ENCODE measurements at regions of chr10 and their contacts with region 1.

Region 1: DNA sequence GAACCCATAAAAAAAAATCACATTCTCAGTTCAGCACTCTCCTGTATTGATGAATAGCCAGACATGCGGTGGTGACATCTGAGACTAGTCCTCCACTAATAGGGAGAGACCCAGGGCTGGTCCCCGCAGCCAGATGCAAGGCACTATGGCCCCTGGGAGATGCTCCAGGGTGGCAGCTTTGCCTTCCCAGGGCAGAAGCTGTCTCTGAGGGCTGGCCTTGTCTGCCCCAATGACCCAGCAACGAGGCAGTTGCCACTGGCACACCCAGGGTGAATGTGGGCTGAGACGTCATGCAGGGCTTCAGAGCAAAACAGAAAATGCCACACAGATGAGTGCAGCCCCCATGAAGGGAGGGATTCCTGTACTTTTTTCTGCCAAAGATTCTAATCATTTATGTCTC is 50.1 kb upstream of the GDF10 start:
- DNase-seq: no peak
- ATAC-seq: no peak
- H3K4me3 ChIP-seq: no peak overlapping the region
- H3K27ac ChIP-seq: no peak overlapping the region
- H3K4me1 ChIP-seq: no peaks in the 10 kb centered on the region
- H3K27me3 ChIP-seq: no peaks in the 10 kb centered on the region
- CTCF ChIP-seq: no peak
- POLR2A ChIP-seq: no peak
- RAD21 ChIP-seq: no peak

Region 2: GRCh38 chr10:46002916-46003693 is 1246.8 kb before region 1 on chr10:
- CTCF ChIA-PET with region 1: no interaction called
- POLR2A ChIA-PET with region 1: no interaction called
- RAD21 ChIA-PET with region 1: no interaction called
- intact Hi-C with region 1: no loop called
- DNase-seq: no peak
- ATAC-seq: no peak
- H3K4me3 ChIP-seq: no peak overlapping the region
- H3K27ac ChIP-seq: no peak overlapping the region
- H3K4me1 ChIP-seq: no peaks in the 10 kb centered on the region
- H3K27me3 ChIP-seq: no peaks in the 10 kb centered on the region
- CTCF ChIP-seq: no peak
- POLR2A ChIP-seq: no peak
- RAD21 ChIP-seq: no peak

Region 3: DNA sequence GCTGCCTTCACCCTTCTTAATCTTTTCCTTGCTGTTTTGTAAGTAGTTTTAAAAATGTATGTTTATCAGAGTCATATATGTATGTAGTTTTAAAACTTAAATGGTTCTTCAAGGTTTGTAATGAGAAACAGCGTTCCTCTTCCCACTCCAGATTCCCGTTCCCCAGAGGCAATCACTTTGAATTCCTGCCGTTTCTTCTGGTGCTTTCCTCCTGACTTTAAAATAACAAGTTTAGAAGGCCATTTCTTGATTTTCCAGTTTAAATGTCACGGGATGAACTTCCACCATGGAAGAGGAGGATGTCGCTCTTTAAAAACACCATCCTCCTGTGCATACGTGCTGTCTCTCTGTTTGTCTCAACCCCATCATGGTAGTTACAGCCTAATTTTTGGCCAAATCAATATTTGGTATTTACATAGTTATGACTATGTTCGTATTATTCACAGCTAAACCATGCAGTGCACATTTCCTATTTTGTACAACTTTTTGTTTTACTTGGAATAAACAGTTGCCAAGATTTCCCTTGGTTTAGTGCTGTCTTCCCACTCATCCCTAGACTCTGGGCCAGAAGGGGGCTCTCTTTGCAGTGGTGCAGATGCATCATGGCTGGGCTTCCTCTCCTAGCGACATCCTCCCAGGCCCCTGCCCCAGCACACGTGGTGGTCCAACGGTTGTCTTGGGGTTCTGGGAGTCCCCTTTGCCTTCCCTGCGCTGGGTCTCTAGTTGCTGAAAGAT is 187.2 kb before region 1 on chr10:
- CTCF ChIA-PET with region 1: no interaction called
- POLR2A ChIA-PET with region 1: no interaction called
- RAD21 ChIA-PET with region 1: no interaction called
- intact Hi-C with region 1: no loop called
- DNase-seq: no peak
- ATAC-seq: peak; percentile 67; the same call in 1 of the 2 replicates
- H3K4me3 ChIP-seq: no peak overlapping the region
- H3K27ac ChIP-seq: no peak overlapping the region
- H3K4me1 ChIP-seq: no peaks in the 10 kb centered on the region
- H3K27me3 ChIP-seq: peaks cover 34% of the 10 kb centered on the region; the same call in 1 of the 2 replicates
- CTCF ChIP-seq: peak; percentile 13 to 39 (median 33); a peak in 5 of 6 replicates
- POLR2A ChIP-seq: no peak
- RAD21 ChIP-seq: peak; percentile 41; the same call in 1 of the 2 replicates

Region 4: DNA sequence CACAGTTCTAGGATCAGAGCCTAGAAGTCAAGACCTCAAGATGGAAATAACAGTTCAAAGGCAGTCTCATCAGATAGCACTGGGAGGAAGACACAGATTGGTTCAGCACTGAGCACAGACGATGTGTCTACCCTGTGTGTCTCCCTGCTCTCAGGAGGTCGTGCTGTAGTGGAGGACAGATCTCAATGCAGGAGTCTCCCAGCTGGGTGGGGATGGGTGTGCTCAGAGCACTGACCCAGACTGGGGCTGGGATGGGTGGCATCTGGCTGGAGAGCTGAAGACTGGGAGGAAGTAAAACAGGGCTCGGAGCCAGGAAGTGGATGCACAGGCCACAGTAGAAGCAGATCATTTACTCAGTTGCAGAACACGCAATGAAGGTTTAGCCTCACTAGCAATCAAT is 19.4 kb before region 1 on chr10:
- CTCF ChIA-PET with region 1: no interaction called
- POLR2A ChIA-PET with region 1: no interaction called
- RAD21 ChIA-PET with region 1: no interaction called
- intact Hi-C with region 1: loop called (anchors 2 kb)
- DNase-seq: no peak
- ATAC-seq: no peak
- H3K4me3 ChIP-seq: no peak overlapping the region
- H3K27ac ChIP-seq: no peak overlapping the region
- H3K4me1 ChIP-seq: no peaks in the 10 kb centered on the region
- H3K27me3 ChIP-seq: no peaks in the 10 kb centered on the region
- CTCF ChIP-seq: no peak
- POLR2A ChIP-seq: no peak
- RAD21 ChIP-seq: no peak